ENCODE measurements at regions of chr7 and their contacts with region 1.

Region 1: GRCh38 chr7:149873074-149873969 is at the start of gene ATP6V0E2:
- DNase-seq: peak; percentile 82 to 96 (median 88)
- ATAC-seq: peak; percentile 72 to 80
- H3K4me3 Mint-ChIP-seq: peak within 1 kb of the TSS; percentile 84 to 96 (median 90)
- H3K27ac Mint-ChIP-seq: peak within 1 kb of the TSS; percentile 83 to 99 (median 98)
- H3K4me1 Mint-ChIP-seq: peaks cover 43 to 89% (median 86%) of the 10 kb centered on the region in 4 donors
- H3K27me3 Mint-ChIP-seq: no peaks in the 10 kb centered on the region
- polyA plus RNA-seq, gene ATP6V0E2: 209 to 253 (median 246) TPM

Region 2: GRCh38 chr7:149838224-149838947 is 34.9 kb before region 1 on chr7 and contains the start of gene ZNF862:
- POLR2A ChIA-PET with region 1: interaction called, 241 read pairs
- DNase-seq: peak; percentile 88 to 97 (median 95)
- ATAC-seq: peak; percentile 95 to 96
- H3K4me3 Mint-ChIP-seq: peak within 1 kb of the TSS; percentile 85 to 97 (median 93)
- H3K27ac Mint-ChIP-seq: peak within 1 kb of the TSS; percentile 30 to 95 (median 92)
- H3K4me1 Mint-ChIP-seq: peaks cover 28 to 46% (median 40%) of the 10 kb centered on the region in 4 donors
- H3K27me3 Mint-ChIP-seq: peaks cover 0 to 5% (median 0%) of the 10 kb centered on the region in 5 donors
- polyA plus RNA-seq, gene ZNF862: 6.1 to 10.6 (median 9.6) TPM

Region 3: GRCh38 chr7:149861446-149862045 is 11.8 kb before region 1 on chr7:
- POLR2A ChIA-PET with region 1: interaction called, 45 read pairs
- DNase-seq: no peak
- ATAC-seq: no peak
- H3K4me3 Mint-ChIP-seq: peak overlapping the region in 1 of 10 donors; percentile 39
- H3K27ac Mint-ChIP-seq: peak overlapping the region in 1 of 10 donors; percentile 80
- H3K4me1 Mint-ChIP-seq: peaks cover 30 to 85% (median 64%) of the 10 kb centered on the region in 4 donors
- H3K27me3 Mint-ChIP-seq: no peaks in the 10 kb centered on the region

Region 4: GRCh38 chr7:149883452-149883861 is 10.1 kb after region 1 on chr7:
- POLR2A ChIA-PET with region 1: interaction called, 24 read pairs
- DNase-seq: peak in 8 of 10 donors; percentile 35 to 80 (median 53)
- ATAC-seq: peak; percentile 91 to 94
- H3K4me3 Mint-ChIP-seq: peak overlapping the region in 1 of 10 donors; percentile 26
- H3K27ac Mint-ChIP-seq: peak overlapping the region in 8 of 10 donors; percentile 12 to 84 (median 70)
- H3K4me1 Mint-ChIP-seq: peaks cover 15 to 39% (median 26%) of the 10 kb centered on the region in 4 donors
- H3K27me3 Mint-ChIP-seq: no peaks in the 10 kb centered on the region

Measured in naive thymus-derived CD8-positive, alpha-beta T cell (primary cell).